Ascending aorta (tissue), 2 donors: ENCODE measurements at regions of chrX and their contacts with region 1.

Region 1: GRCh38 chrX:19334945-19335626 is 8.6 kb upstream of the PDHA1 start:
- DNase-seq: no peak
- H3K4me3 ChIP-seq: no peak overlapping the region
- H3K27ac ChIP-seq: no peak overlapping the region
- H3K4me1 ChIP-seq: no peaks in the 10 kb centered on the region
- H3K27me3 ChIP-seq: no peaks in the 10 kb centered on the region
- CTCF ChIP-seq: no peak

Region 2: GRCh38 chrX:18390941-18391538 is 944.0 kb before region 1 on chrX:
- intact Hi-C with region 1: loop called (anchors 1 kb)
- DNase-seq: peak in 1 of 2 donors; percentile 84
- H3K4me3 ChIP-seq: no peak overlapping the region
- H3K27ac ChIP-seq: no peak overlapping the region
- H3K4me1 ChIP-seq: no peaks in the 10 kb centered on the region
- H3K27me3 ChIP-seq: no peaks in the 10 kb centered on the region
- CTCF ChIP-seq: peak; percentile 62 to 79 (median 63)

Region 3: GRCh38 chrX:18931972-18932371 is 403.1 kb before region 1 on chrX:
- intact Hi-C with region 1: loop called (anchors 5 kb)
- DNase-seq: no peak
- H3K4me3 ChIP-seq: no peak overlapping the region
- H3K27ac ChIP-seq: no peak overlapping the region
- H3K4me1 ChIP-seq: no peaks in the 10 kb centered on the region
- H3K27me3 ChIP-seq: no peaks in the 10 kb centered on the region
- CTCF ChIP-seq: peak; percentile 7 to 34 (median 7)

Region 4: GRCh38 chrX:19017271-19017670 is 317.8 kb before region 1 on chrX:
- intact Hi-C with region 1: loop called (anchors 10 kb)
- DNase-seq: no peak
- H3K4me3 ChIP-seq: no peak overlapping the region
- H3K27ac ChIP-seq: no peak overlapping the region
- H3K4me1 ChIP-seq: no peaks in the 10 kb centered on the region
- H3K27me3 ChIP-seq: no peaks in the 10 kb centered on the region
- CTCF ChIP-seq: peak in 2 of 3 experiments; percentile 26 to 27

Region 5: DNA sequence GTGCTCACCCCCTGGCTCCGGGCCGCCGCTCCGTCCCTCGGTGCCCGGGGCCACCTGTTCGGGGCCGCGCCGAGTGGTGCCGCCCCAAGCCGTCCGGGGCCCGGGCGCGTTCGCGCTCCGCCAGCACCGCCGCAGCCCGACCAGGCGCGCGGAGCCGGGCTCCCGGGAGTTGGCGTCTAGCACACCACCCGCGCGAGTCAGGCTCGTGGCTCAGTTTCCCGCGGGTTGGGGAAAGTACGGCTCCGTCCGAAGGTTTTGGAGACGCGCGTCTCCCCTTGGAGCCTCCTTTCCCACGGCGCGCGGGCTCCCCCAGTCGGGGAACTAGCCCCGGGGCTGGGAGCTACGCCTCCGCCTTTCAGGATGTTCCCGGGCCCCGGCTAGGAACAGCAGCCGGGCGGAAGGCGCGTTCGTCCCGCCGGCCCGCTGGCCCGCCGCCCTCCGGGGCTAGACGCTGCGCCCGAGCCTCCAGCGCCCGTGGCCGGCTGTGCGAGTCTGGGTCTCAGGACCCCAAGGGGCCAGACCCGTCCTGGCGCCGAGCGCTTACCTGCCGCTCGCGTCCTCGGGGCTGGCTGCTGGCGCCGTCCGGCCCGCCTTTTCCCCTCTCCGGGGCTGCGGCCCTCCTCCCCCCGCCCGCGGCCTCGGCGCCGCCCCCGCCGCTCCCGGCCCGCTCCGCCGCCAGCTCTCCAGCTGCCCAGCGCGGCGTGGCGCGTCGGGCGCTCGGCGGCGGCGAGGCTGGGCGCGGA is 213.0 kb before region 1 on chrX and contains the start of gene ADGRG2:
- intact Hi-C with region 1: loop called (anchors 5 kb)
- DNase-seq: peak in 1 of 2 donors; percentile 70
- H3K4me3 ChIP-seq: peak within 1 kb of the TSS; percentile 57 to 72
- H3K27ac ChIP-seq: peak within 1 kb of the TSS in 1 of 2 donors; percentile 56
- H3K4me1 ChIP-seq: no peaks in the 10 kb centered on the region
- H3K27me3 ChIP-seq: no peaks in the 10 kb centered on the region
- CTCF ChIP-seq: peak in 1 of 3 experiments; percentile 31
- total RNA-seq, gene ADGRG2: 4.3 TPM